ENCODE measurements at regions of chr16 and their contacts with region 1.

Region 1: GRCh38 chr16:57045694-57046381 is 46.5 kb upstream of the CPNE2 start:
- DNase-seq: no peak
- H3K4me3 ChIP-seq: no peak overlapping the region
- H3K4me3 Mint-ChIP-seq: peak overlapping the region in 1 of 8 donors; percentile 9
- H3K27ac ChIP-seq: peak overlapping the region; percentile 21
- H3K27ac Mint-ChIP-seq: peak overlapping the region; percentile 60 to 98 (median 77)
- H3K4me1 ChIP-seq: peaks cover 49% of the 10 kb centered on the region
- H3K4me1 Mint-ChIP-seq: peaks cover 28 to 47% (median 36%) of the 10 kb centered on the region in 4 donors
- H3K27me3 ChIP-seq: no peaks in the 10 kb centered on the region
- H3K27me3 Mint-ChIP-seq: no peaks in the 10 kb centered on the region

Region 2: DNA sequence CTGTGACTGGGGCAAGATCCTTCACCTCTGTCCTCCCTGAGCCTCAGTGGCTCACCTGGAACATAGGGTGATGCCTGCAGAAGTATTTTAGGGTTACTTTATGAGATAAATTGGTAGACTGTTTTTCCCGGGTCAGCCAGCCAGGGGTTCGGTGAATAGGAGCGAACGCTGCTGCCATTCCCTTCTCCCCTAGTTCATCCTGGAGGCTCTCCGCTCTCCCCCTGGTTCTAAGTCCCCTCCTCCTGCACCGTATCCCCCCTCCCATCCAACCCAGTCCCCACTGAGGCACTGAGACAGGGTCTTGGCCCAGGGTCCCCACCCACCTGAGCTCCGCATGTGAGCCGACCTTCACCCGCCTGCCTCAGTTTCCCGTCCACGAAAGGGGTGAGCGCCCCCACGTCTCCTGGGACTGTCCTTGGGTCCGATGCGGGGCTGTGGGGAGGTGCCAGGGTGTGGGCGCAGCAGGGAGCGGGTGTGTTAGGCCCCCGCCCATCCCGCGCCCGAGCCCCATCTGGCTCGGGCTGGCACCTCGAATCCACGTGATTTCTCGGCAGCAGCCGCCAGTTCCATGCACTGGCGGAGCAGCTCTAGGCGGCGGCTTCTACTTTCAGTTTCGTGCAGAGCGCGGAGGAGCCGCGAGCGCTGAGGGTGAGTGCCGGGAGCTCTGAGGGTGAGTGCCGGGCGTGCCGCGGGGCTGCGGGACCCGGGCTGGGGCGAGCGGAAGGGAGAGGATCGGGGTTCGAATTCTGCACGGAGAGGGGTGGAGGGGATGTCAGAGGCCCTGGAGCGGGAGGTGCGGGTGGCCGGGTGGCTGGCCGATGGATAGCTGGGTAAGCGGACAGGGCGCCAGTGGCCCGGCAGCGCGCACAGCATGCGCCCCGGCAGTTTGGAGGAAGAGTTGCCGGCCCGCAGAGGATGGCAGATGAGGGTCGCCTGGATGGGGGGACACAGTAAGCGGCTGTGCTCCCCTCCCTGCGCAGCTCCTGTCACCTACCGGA is 56.6 kb before region 1 on chr16 and contains the start of gene NLRC5:
- CTCF ChIA-PET with region 1: interaction called, 17 read pairs
- POLR2A ChIA-PET with region 1: interaction called, 183 read pairs
- intact Hi-C with region 1: loop called (anchors 1 kb)
- DNase-seq: peak; percentile 85 to 94 (median 89)
- H3K4me3 ChIP-seq: peak within 1 kb of the TSS; percentile 85 to 91
- H3K4me3 Mint-ChIP-seq: peak within 1 kb of the TSS; percentile 94 to 100 (median 99)
- H3K27ac ChIP-seq: peak within 1 kb of the TSS; percentile 97
- H3K27ac Mint-ChIP-seq: peak within 1 kb of the TSS; percentile 89 to 100 (median 98)
- H3K4me1 ChIP-seq: peaks cover 72% of the 10 kb centered on the region
- H3K4me1 Mint-ChIP-seq: peaks cover 50 to 96% (median 64%) of the 10 kb centered on the region in 4 donors
- H3K27me3 ChIP-seq: no peaks in the 10 kb centered on the region
- H3K27me3 Mint-ChIP-seq: no peaks in the 10 kb centered on the region
- total RNA-seq, gene NLRC5: 416 to 457 TPM

Region 3: DNA sequence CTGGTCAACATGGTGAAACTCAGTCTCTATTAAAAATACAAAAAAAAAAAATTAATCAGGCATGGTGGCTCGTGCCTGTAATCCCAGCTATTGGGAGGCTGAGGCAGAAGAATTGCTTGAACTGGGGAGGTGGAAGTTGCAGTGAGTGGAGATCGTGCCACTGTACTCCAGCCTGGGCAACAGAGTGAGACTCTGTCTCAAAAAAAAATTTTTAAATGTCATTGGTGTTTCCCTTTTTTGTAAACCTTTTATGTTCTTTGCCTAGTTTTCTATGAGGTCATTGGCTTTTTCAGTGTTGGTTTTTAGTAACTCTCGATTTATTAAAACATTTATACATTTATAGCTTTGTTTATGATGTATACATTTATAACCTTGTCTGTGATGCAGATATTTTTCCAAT is 38.3 kb before region 1 on chr16:
- CTCF ChIA-PET with region 1: interaction called, 7 read pairs
- POLR2A ChIA-PET with region 1: interaction called, 90 read pairs
- intact Hi-C with region 1: no loop called
- DNase-seq: no peak
- H3K4me3 ChIP-seq: no peak overlapping the region
- H3K4me3 Mint-ChIP-seq: peak overlapping the region in 3 of 8 donors; percentile 35 to 70 (median 40)
- H3K27ac ChIP-seq: peak overlapping the region; percentile 44
- H3K27ac Mint-ChIP-seq: peak overlapping the region in 5 of 7 donors; percentile 42 to 84 (median 46)
- H3K4me1 ChIP-seq: peaks cover 100% of the 10 kb centered on the region
- H3K4me1 Mint-ChIP-seq: peaks cover 48 to 91% (median 70%) of the 10 kb centered on the region in 4 donors
- H3K27me3 ChIP-seq: no peaks in the 10 kb centered on the region
- H3K27me3 Mint-ChIP-seq: no peaks in the 10 kb centered on the region

Region 4: GRCh38 chr16:57023541-57024249 is 22.1 kb before region 1 on chr16:
- CTCF ChIA-PET with region 1: interaction called, 28 read pairs
- POLR2A ChIA-PET with region 1: interaction called, 162 read pairs
- intact Hi-C with region 1: loop called (anchors 1 kb)
- DNase-seq: peak; percentile 77 to 91 (median 83)
- H3K4me3 ChIP-seq: peak overlapping the region; percentile 5 to 11
- H3K4me3 Mint-ChIP-seq: peak overlapping the region in 7 of 8 donors; percentile 54 to 84 (median 73)
- H3K27ac ChIP-seq: peak overlapping the region; percentile 58
- H3K27ac Mint-ChIP-seq: peak overlapping the region; percentile 87 to 94 (median 90)
- H3K4me1 ChIP-seq: peaks cover 92% of the 10 kb centered on the region
- H3K4me1 Mint-ChIP-seq: peaks cover 66 to 99% (median 82%) of the 10 kb centered on the region in 4 donors
- H3K27me3 ChIP-seq: no peaks in the 10 kb centered on the region
- H3K27me3 Mint-ChIP-seq: no peaks in the 10 kb centered on the region

Measured in CD4-positive, alpha-beta memory T cell (primary cell).